Activated T-helper 1 cell treated with anti-CD3 and anti-CD28 coated beads, Interleukin-12 subunit alpha, Interleukin-12 subunit beta, Interleukin-2, Interleukin-4 antibody, amounts not matched to agents 30 ng/mL and 10 ng/mL and 1 ng/mL, durations not matched to agents 14 hours and 24 hours and 36 hours (primary cell): ENCODE measurements at regions of chr1 and their contacts with region 1.

Region 1: GRCh38 chr1:20212685-20213331 is 26.5 kb upstream of the PLA2G2C start:
- DNase-seq: peak; percentile 42
- H3K4me3 Mint-ChIP-seq: no peak overlapping the region
- H3K27ac Mint-ChIP-seq: no peak overlapping the region
- H3K4me1 Mint-ChIP-seq: peaks cover 6% of the 10 kb centered on the region
- H3K27me3 Mint-ChIP-seq: peaks cover 44% of the 10 kb centered on the region

Region 2: GRCh38 chr1:20153000-20153418 is 59.8 kb before region 1 on chr1:
- intact Hi-C with region 1: no loop called
- DNase-seq: no peak
- H3K4me3 Mint-ChIP-seq: no peak overlapping the region
- H3K27ac Mint-ChIP-seq: no peak overlapping the region
- H3K4me1 Mint-ChIP-seq: peaks cover 17% of the 10 kb centered on the region
- H3K27me3 Mint-ChIP-seq: peaks cover 2% of the 10 kb centered on the region

Region 3: GRCh38 chr1:20376880-20377494 is 164.2 kb after region 1 on chr1:
- intact Hi-C with region 1: loop called (anchors 10 kb)
- DNase-seq: peak; percentile 21
- H3K4me3 Mint-ChIP-seq: no peak overlapping the region
- H3K27ac Mint-ChIP-seq: no peak overlapping the region
- H3K4me1 Mint-ChIP-seq: peaks cover 3% of the 10 kb centered on the region
- H3K27me3 Mint-ChIP-seq: peaks cover 17% of the 10 kb centered on the region

Region 4: DNA sequence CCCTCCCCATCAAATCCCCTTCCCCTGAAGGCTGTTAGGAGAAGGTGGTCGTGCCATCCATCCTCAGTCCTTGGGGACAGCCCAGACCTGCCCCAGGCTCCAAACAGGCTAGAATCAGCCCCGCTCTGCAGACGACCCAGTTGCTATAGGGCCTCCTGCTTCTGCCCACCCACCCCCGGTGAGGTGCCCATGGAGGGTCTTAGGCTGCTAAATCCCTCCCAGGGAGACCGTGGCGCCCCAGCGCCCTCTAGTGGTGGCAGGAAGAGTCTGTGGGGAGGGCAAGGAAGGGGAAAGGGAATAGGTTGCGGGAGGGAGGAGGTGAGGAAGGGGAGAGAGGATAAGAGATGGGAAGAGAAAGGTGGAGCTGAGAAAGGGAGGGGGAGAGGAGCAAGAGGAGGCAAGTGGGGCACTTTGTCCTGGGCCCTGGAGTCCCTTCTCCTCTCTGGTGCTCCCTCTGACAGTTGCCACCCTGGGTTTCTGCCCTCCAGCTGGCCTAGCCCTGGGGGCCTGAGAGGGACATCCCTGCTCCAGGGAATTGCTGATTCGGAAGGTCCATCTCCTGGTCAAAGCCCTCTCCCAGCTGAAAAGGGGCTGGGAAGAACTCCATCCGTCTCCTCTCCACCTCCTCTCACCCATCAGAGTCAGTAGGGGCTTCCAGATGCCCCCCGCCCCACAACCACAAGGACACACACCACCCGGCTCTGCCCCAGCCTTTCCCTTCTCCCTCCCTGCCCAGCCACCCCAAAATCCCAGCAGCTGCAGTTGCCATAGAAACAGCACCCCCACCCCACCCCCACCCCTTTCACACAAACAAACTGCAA is 217.8 kb after region 1 on chr1:
- intact Hi-C with region 1: loop called (anchors 1 kb)
- DNase-seq: peak; percentile 8
- H3K4me3 Mint-ChIP-seq: no peak overlapping the region
- H3K27ac Mint-ChIP-seq: no peak overlapping the region
- H3K4me1 Mint-ChIP-seq: peaks cover 8% of the 10 kb centered on the region
- H3K27me3 Mint-ChIP-seq: peaks cover 8% of the 10 kb centered on the region

Region 5: GRCh38 chr1:20640183-20640597 is 427.4 kb after region 1 on chr1:
- intact Hi-C with region 1: loop called (anchors 10 kb)
- DNase-seq: peak; percentile 45
- H3K4me3 Mint-ChIP-seq: no peak overlapping the region
- H3K27ac Mint-ChIP-seq: no peak overlapping the region
- H3K4me1 Mint-ChIP-seq: no peaks in the 10 kb centered on the region
- H3K27me3 Mint-ChIP-seq: no peaks in the 10 kb centered on the region